HCT116 (cell line): ENCODE measurements at regions of chr1 and their contacts with region 1.

Region 1: DNA sequence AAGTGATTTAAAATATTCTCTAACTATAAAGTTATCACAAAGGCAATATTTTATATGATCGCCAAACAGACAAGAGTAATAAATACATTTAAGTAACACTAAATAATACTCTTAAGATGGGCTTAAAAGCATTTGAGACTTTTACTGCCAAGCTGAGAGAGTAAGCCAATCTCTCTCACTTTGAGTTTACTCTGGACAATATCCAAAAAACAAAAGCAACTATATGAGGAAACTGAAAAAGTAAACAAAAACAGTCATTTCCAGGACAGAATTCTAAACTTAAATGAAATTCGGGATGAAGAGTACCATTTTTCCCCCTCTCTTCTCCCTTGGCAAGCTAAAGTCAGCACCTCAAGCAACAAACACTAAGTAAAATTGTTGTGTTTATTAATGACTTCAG is 173.2 kb downstream of the COP1 start:
- DNase-seq: no peak
- ATAC-seq: no peak
- H3K4me3 ChIP-seq: no peak overlapping the region
- H3K27ac ChIP-seq: no peak overlapping the region
- H3K4me1 ChIP-seq: peaks cover 4% of the 10 kb centered on the region in 2 experiments; a peak in 1 of 4 replicates
- H3K27me3 ChIP-seq: no peaks in the 10 kb centered on the region
- CTCF ChIP-seq: no peak
- POLR2A ChIP-seq: no peak
- RAD21 ChIP-seq: no peak

Region 2: DNA sequence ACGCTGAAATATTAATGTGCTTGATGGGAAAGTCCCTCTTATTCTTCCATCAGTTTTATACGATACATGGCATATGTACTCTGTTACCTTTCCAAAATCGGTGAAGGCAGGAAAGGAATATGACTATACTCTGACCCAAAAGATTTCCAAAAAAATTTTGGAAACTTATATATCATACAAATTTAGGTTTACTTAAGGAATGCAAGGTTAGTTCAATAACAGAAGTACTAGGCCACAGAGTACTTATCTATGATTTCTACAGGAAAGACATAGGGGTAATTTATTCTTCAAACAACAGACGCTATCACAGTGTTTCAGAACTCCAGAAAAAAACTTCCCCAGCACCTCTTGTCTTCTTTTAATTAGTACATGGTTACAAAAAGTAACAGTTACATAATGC is 88.4 kb after region 1 on chr1:
- CTCF ChIA-PET with region 1: no interaction called
- POLR2A ChIA-PET with region 1: no interaction called
- RAD21 ChIA-PET with region 1: no interaction called
- intact Hi-C with region 1: loop called (anchors 5 kb)
- DNase-seq: no peak
- ATAC-seq: no peak
- H3K4me3 ChIP-seq: no peak overlapping the region
- H3K27ac ChIP-seq: no peak overlapping the region
- H3K4me1 ChIP-seq: no peaks in the 10 kb centered on the region
- H3K27me3 ChIP-seq: no peaks in the 10 kb centered on the region
- CTCF ChIP-seq: no peak
- POLR2A ChIP-seq: no peak
- RAD21 ChIP-seq: no peak